ENCODE measurements at regions of chr2 and their contacts with region 1.

Region 1: GRCh38 chr2:189580658-189581353 is at the start of gene SLC40A1:
- DNase-seq: peak; percentile 44 to 88 (median 69)
- ATAC-seq: peak; percentile 96
- H3K4me3 ChIP-seq: peak within 1 kb of the TSS; percentile 79
- H3K4me3 Mint-ChIP-seq: peak within 1 kb of the TSS; percentile 95
- H3K27ac ChIP-seq: peak within 1 kb of the TSS; percentile 46 to 66
- H3K27ac Mint-ChIP-seq: peak within 1 kb of the TSS; percentile 83
- H3K4me1 ChIP-seq: peaks cover 21% of the 10 kb centered on the region
- H3K4me1 Mint-ChIP-seq: peaks cover 56% of the 10 kb centered on the region
- H3K27me3 ChIP-seq: no peaks in the 10 kb centered on the region
- H3K27me3 Mint-ChIP-seq: peaks cover 9% of the 10 kb centered on the region
- CTCF ChIP-seq: no peak
- total RNA-seq, gene SLC40A1: 7.4 to 8.2 TPM

Region 2: GRCh38 chr2:189440947-189441708 is 139.7 kb before region 1 on chr2 and contains the start of gene WDR75:
- CTCF ChIA-PET with region 1: no interaction called
- POLR2A ChIA-PET with region 1: interaction called, 26 read pairs
- intact Hi-C with region 1: loop called in 1 of 2 experiments (anchors 5 kb)
- DNase-seq: peak; percentile 85 to 96 (median 90)
- ATAC-seq: peak; percentile 93
- H3K4me3 ChIP-seq: peak within 1 kb of the TSS; percentile 78
- H3K4me3 Mint-ChIP-seq: no peak within 1 kb of the TSS
- H3K27ac ChIP-seq: peak within 1 kb of the TSS; percentile 90 to 97
- H3K27ac Mint-ChIP-seq: peak within 1 kb of the TSS; percentile 97
- H3K4me1 ChIP-seq: peaks cover 21% of the 10 kb centered on the region
- H3K4me1 Mint-ChIP-seq: peaks cover 16% of the 10 kb centered on the region
- H3K27me3 ChIP-seq: no peaks in the 10 kb centered on the region
- H3K27me3 Mint-ChIP-seq: no peaks in the 10 kb centered on the region
- CTCF ChIP-seq: no peak
- total RNA-seq, gene WDR75: 38.1 to 45.3 TPM

Region 3: DNA sequence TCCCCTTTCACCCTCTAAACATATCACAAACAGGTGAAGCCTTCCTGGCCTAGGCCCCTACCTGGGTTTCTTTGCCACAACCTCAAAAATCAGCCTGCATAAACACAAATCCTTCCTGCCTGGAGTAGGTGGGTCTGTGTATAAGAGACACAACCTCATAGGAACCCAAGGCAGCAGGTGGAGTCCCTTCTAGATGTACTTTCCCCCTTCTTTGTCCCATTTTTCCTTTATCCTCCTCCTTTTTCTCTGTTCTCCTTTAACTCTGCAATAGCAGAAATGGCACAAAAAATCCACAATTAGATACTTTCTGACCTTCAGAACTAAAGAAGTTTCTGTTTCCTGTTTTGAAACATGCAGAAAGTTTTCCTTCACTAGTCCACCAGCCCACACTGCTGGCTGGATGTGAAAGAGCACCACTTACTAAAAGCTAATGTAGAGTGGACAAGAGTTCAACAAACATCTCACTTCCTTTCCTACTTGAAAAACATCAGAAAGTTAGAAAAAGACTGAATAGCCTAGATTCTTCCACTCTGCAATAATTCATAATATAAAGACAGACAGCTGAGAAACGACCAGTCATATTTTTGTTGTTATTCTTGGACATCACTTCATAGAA is 11.4 kb before region 1 on chr2:
- CTCF ChIA-PET with region 1: no interaction called
- POLR2A ChIA-PET with region 1: interaction called, 27 read pairs
- intact Hi-C with region 1: no loop called
- DNase-seq: no peak
- ATAC-seq: no peak
- H3K4me3 ChIP-seq: no peak overlapping the region
- H3K4me3 Mint-ChIP-seq: peak overlapping the region; percentile 0
- H3K27ac ChIP-seq: peak overlapping the region; percentile 52 to 57
- H3K27ac Mint-ChIP-seq: peak overlapping the region; percentile 75
- H3K4me1 ChIP-seq: peaks cover 6% of the 10 kb centered on the region
- H3K4me1 Mint-ChIP-seq: peaks cover 62% of the 10 kb centered on the region
- H3K27me3 ChIP-seq: no peaks in the 10 kb centered on the region
- H3K27me3 Mint-ChIP-seq: no peaks in the 10 kb centered on the region
- CTCF ChIP-seq: no peak

Region 4: GRCh38 chr2:189592353-189592984 is 11.7 kb after region 1 on chr2:
- CTCF ChIA-PET with region 1: no interaction called
- POLR2A ChIA-PET with region 1: interaction called, 11 read pairs
- intact Hi-C with region 1: loop called in 1 of 2 experiments (anchors 1 kb)
- DNase-seq: peak in 2 of 14 experiments; percentile 8 to 34
- ATAC-seq: peak; percentile 48
- H3K4me3 ChIP-seq: peak overlapping the region; percentile 7
- H3K4me3 Mint-ChIP-seq: peak overlapping the region; percentile 7
- H3K27ac ChIP-seq: peak overlapping the region; percentile 2 to 25
- H3K27ac Mint-ChIP-seq: peak overlapping the region; percentile 34
- H3K4me1 ChIP-seq: peaks cover 10% of the 10 kb centered on the region
- H3K4me1 Mint-ChIP-seq: peaks cover 46% of the 10 kb centered on the region
- H3K27me3 ChIP-seq: no peaks in the 10 kb centered on the region
- H3K27me3 Mint-ChIP-seq: no peaks in the 10 kb centered on the region
- CTCF ChIP-seq: no peak

Region 5: GRCh38 chr2:189674374-189675112 is 93.7 kb after region 1 on chr2 and contains the start of gene ANKAR:
- CTCF ChIA-PET with region 1: interaction called, 3 read pairs
- POLR2A ChIA-PET with region 1: interaction called, 11 read pairs
- intact Hi-C with region 1: no loop called
- DNase-seq: peak; percentile 61 to 93 (median 74)
- ATAC-seq: peak; percentile 93
- H3K4me3 ChIP-seq: peak within 1 kb of the TSS; percentile 71
- H3K4me3 Mint-ChIP-seq: peak within 1 kb of the TSS; percentile 95
- H3K27ac ChIP-seq: peak within 1 kb of the TSS; percentile 73 to 81
- H3K27ac Mint-ChIP-seq: peak within 1 kb of the TSS; percentile 98
- H3K4me1 ChIP-seq: peaks cover 21% of the 10 kb centered on the region
- H3K4me1 Mint-ChIP-seq: peaks cover 29% of the 10 kb centered on the region
- H3K27me3 ChIP-seq: no peaks in the 10 kb centered on the region
- H3K27me3 Mint-ChIP-seq: no peaks in the 10 kb centered on the region
- CTCF ChIP-seq: peak; percentile 76
- total RNA-seq, gene ANKAR: 7.9 to 8.0 TPM

Region 6: GRCh38 chr2:189709501-189710221 is 128.9 kb after region 1 on chr2:
- CTCF ChIA-PET with region 1: no interaction called
- POLR2A ChIA-PET with region 1: no interaction called
- intact Hi-C with region 1: no loop called
- DNase-seq: no peak
- ATAC-seq: no peak
- H3K4me3 ChIP-seq: no peak overlapping the region
- H3K4me3 Mint-ChIP-seq: no peak overlapping the region
- H3K27ac ChIP-seq: no peak overlapping the region
- H3K27ac Mint-ChIP-seq: no peak overlapping the region
- H3K4me1 ChIP-seq: no peaks in the 10 kb centered on the region
- H3K4me1 Mint-ChIP-seq: no peaks in the 10 kb centered on the region
- H3K27me3 ChIP-seq: no peaks in the 10 kb centered on the region
- H3K27me3 Mint-ChIP-seq: no peaks in the 10 kb centered on the region
- CTCF ChIP-seq: no peak

Measured in CD4-positive, alpha-beta T cell (primary cell).